ENCODE measurements at regions of chr7 and their contacts with region 1.

Region 1: GRCh38 chr7:139767561-139767982 is 10.2 kb downstream of the HIPK2 start:
- DNase-seq: peak; percentile 38
- H3K4me3 Mint-ChIP-seq: no peak overlapping the region
- H3K27ac Mint-ChIP-seq: peak overlapping the region; percentile 73
- H3K4me1 Mint-ChIP-seq: peaks cover 76% of the 10 kb centered on the region
- H3K27me3 Mint-ChIP-seq: no peaks in the 10 kb centered on the region

Region 2: DNA sequence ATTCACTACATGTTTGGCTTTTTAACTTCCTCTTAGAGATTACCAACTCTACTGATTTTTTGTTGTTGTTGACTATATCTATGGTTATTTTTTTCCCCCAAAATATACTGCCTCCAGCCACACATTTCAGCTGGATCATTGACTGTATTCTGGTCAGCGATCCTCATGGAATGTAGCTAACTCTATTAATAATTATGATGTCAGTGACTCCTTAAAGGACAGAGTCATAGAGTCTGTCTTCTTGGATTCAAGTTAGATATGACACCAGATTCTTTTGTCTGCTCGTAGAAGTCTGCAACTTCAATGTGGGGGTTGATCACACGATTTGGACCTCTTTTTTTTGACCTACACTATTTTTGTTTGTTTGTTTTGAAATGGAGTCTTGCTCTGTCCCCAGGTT is 503.4 kb before region 1 on chr7:
- CTCF ChIA-PET with region 1: no interaction called
- intact Hi-C with region 1: no loop called
- DNase-seq: no peak
- H3K4me3 Mint-ChIP-seq: no peak overlapping the region
- H3K27ac Mint-ChIP-seq: no peak overlapping the region
- H3K4me1 Mint-ChIP-seq: no peaks in the 10 kb centered on the region
- H3K27me3 Mint-ChIP-seq: no peaks in the 10 kb centered on the region

Region 3: DNA sequence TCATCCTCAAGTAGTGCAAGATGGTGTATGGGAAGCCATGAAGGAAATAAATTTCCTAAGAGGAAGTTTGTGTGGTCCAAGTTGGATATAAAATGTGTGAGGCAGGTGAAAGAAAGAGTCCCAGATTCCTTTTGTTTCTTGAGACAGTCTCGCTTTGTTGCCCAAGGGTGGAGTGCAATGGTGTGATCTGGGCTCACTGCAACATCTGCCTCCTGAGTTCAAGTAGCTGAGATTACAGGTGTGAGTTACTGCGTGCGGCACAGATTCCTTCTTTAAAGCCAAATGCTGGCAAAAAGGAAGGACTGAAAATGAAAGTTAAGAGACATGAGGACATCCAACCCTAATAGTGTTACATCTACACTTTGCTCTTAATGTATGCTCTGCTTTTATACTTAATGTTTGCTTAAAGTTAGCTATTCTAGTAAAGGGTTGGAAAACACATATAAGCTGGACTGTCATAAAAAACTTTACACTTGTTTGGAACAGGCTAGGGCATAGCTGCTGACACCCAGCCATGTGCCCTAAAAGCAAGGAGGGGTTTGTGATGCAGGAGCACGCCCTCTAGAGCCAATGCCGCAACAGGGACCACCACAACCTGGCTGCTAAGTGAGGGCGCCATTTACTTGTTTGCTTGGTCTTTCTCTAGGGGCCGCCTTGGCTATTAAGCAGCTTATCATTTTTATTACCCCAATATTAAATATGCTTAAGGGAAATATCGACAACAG is 209.6 kb before region 1 on chr7:
- CTCF ChIA-PET with region 1: no interaction called
- intact Hi-C with region 1: no loop called
- DNase-seq: no peak
- H3K4me3 Mint-ChIP-seq: no peak overlapping the region
- H3K27ac Mint-ChIP-seq: no peak overlapping the region
- H3K4me1 Mint-ChIP-seq: no peaks in the 10 kb centered on the region
- H3K27me3 Mint-ChIP-seq: no peaks in the 10 kb centered on the region

Region 4: GRCh38 chr7:139696552-139696951 is 71.0 kb before region 1 on chr7:
- CTCF ChIA-PET with region 1: no interaction called
- intact Hi-C with region 1: loop called (anchors 1 kb)
- DNase-seq: peak; percentile 78
- H3K4me3 Mint-ChIP-seq: no peak overlapping the region
- H3K27ac Mint-ChIP-seq: peak overlapping the region; percentile 81
- H3K4me1 Mint-ChIP-seq: peaks cover 30% of the 10 kb centered on the region
- H3K27me3 Mint-ChIP-seq: no peaks in the 10 kb centered on the region

Region 5: DNA sequence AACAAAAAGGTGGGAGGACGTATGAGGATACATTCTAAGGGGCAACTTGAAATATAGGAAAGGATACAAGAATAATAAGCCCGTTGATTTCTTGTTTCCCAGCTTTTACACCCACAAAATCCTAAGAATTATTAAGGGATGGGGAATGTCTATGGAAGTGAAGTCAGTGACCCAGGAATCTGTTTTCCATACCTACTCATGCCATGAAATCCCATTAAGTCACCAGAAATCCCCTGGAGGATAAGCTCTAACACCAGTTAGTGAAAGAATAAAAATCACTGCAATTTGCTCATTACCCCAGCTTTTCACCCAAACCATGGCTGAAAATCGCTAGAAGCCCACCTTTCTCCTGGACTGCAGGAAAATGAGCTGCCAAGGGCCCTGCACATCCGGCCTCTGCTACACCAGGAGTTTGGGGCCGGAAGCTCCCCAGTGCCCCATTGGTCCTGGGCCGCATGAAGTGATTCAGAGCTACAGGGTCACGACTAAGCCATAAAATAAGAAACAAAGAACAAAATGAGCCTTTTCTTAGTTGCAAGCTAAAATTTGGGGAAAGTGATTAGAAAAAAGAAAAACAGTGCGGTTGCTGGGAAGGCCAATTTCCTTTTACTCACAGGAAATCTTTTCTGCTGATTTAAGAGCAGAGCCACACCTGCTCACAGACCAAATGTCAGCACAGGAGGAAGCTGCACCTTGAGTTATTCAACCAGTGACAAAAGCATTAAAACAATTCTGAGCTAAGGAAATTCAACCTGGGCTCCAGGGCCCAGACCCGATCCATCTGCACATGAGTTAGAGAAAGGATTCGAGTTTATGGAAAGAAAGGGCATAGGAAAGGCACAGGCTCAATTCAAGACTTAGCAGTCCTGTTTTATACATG is 30.1 kb before region 1 on chr7:
- CTCF ChIA-PET with region 1: interaction called, 3 read pairs
- intact Hi-C with region 1: loop called (anchors 1 kb)
- DNase-seq: peak; percentile 74
- H3K4me3 Mint-ChIP-seq: peak overlapping the region; percentile 38
- H3K27ac Mint-ChIP-seq: peak overlapping the region; percentile 84
- H3K4me1 Mint-ChIP-seq: peaks cover 55% of the 10 kb centered on the region
- H3K27me3 Mint-ChIP-seq: no peaks in the 10 kb centered on the region

Region 6: GRCh38 chr7:140062528-140063299 is 295.1 kb after region 1 on chr7 and contains the start of gene PARP12:
- CTCF ChIA-PET with region 1: no interaction called
- intact Hi-C with region 1: loop called (anchors 5 kb)
- DNase-seq: peak; percentile 76
- H3K4me3 Mint-ChIP-seq: peak within 1 kb of the TSS; percentile 81
- H3K27ac Mint-ChIP-seq: no peak within 1 kb of the TSS
- H3K4me1 Mint-ChIP-seq: peaks cover 35% of the 10 kb centered on the region
- H3K27me3 Mint-ChIP-seq: no peaks in the 10 kb centered on the region
- total RNA-seq, gene PARP12: 25.2 to 25.3 TPM